Ovary (tissue), 10 donors: ENCODE measurements at regions of chr15 and their contacts with region 1.

Region 1: GRCh38 chr15:49918121-49918520 is 200.9 kb downstream of the ATP8B4 start:
- DNase-seq: no peak
- H3K4me3 ChIP-seq: no peak overlapping the region
- H3K27ac ChIP-seq: no peak overlapping the region
- H3K4me1 ChIP-seq: no peaks in the 10 kb centered on the region
- H3K27me3 ChIP-seq: no peaks in the 10 kb centered on the region
- CTCF ChIP-seq: no peak
- EP300 ChIP-seq: no peak
- POLR2A ChIP-seq: no peak

Region 2: DNA sequence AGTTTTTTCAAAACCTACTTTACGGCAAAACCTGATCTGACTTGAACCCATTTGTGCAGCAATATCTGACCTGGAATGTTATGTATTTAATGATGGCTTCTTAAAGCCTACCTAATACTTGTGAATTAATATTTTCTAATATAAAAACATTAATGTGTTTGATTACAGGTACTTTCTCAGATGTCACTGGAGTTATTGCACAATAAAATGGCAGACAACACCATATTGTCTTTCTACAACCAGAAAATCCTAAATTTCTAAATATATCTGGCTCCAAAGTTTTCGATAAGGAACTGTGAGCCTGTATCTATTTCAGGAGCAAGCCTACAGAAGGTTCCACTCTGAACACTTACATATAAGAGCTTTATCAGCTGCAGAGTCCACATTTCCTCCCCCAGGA is 16.4 kb after region 1 on chr15:
- intact Hi-C with region 1: loop called in 1 of 4 experiments (anchors 1 kb)
- DNase-seq: no peak
- H3K4me3 ChIP-seq: no peak overlapping the region
- H3K27ac ChIP-seq: no peak overlapping the region
- H3K4me1 ChIP-seq: no peaks in the 10 kb centered on the region
- H3K27me3 ChIP-seq: no peaks in the 10 kb centered on the region
- CTCF ChIP-seq: no peak
- EP300 ChIP-seq: no peak
- POLR2A ChIP-seq: no peak